ENCODE measurements at regions of chr16 and their contacts with region 1.

Region 1: DNA sequence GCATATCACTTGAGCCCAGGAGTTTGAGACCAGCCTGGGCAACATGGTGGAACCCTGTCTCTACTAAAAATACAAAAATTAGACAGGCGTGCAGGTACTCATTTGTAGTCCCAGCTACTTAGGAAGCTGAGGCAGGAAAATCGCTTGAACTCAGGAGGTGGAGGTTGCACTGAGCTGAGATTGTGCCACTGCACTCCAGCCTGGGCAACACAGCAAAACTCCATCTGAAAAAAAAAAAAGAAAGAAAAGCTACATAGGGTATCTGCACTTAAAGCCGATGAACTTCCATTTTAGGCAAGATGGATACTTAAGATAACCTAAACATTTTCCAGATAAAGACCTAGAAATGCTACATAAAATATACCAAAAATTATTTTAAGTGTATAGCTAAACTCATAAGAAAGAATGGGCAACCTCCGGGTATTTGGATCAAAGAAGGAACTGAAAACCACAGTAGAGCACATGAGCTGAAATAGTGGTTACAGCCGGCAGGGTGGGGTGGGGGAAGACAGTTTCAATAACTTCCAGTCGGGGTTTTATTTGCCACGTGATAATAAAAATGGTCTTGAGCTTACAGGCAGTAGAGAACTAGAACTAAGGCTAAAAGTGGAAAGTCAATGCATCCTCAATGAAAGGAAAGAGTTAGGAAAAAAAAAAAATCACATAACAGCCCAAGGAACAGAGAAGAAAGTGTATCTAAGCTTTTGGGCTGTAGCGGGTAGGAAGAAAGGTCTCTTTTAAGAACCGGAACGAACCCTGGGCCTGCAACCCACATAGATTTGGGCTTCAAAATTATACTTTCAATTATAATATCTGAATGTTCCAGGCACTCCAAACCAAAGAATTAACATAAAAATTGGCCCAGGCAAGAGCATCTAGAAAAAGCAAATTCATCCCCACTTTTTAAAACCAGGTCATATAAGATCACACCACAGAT is 53.1 kb downstream of the CFDP1 start:
- DNase-seq: no peak
- ATAC-seq: no peak

Region 2: GRCh38 chr16:75319513-75320411 is 60.4 kb before region 1 on chr16:
- intact Hi-C with region 1: loop called (anchors 10 kb)
- DNase-seq: no peak
- ATAC-seq: no peak

Region 3: DNA sequence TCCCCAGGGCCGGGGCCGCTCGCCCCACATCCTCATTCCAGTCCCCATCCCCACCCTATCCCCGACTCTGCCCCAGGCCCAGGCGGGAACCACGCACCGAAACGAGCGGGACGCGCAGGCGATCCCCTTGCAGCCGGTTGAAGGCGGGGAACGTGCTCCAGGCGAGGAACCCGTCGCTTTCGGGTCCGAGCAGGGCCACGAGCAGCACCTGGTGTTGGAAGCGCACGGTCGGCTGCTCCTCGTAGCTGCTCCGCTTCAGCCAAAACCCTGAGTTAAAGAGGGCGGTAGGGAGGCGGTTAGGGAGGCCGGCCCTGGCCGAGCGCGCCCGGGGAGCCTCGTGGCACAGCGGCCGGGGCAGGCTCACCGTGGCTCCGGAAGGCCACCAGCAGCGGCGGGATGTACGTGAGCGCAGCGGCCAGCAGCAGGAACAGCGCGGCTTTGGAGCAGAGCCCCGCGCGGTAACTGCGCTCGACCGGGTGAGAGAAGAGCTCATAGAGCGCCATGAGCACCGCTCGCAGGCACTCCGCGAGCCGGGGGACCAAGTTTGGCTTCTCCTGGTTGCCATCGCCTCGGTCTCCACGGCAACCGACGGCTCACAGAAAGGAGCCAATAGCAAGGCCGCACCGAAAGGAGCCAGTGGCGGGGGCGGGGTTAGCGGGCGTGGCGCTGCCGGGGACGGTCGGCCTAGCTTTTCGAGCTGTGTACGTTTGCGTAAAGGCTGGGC is 175.7 kb after region 1 on chr16 and contains the start of gene TMEM231:
- intact Hi-C with region 1: no loop called
- DNase-seq: peak; percentile 100
- ATAC-seq: peak; percentile 97
- total RNA-seq, gene TMEM231: 4.4 TPM

Region 4: GRCh38 chr16:76114681-76115080 is 734.5 kb after region 1 on chr16:
- intact Hi-C with region 1: no loop called
- DNase-seq: no peak
- ATAC-seq: no peak